ENCODE measurements at regions of chr14 and their contacts with region 1.

Region 1: GRCh38 chr14:65287264-65288131 is 125.0 kb upstream of the FUT8 start:
- DNase-seq: peak; percentile 81
- CTCF ChIP-seq: no peak

Region 2: DNA sequence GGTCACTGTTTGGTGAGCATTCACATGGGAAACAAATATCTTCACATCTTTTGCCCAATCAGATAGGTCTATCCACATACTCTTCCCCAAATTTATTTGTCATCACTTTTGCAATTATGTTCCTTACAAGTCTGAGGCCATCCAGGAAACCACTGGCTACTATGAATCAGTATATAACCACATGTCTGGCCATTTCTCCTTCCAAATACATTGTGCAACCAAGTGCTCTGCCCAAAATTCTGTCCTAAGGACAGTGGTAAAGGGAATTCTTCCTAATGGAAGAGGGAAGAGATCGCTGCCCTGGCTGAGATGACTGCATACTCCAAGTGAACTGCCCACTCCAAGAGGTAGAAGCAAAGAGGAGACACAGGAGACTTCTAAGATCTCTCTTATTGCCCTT is 36.3 kb before region 1 on chr14:
- CTCF ChIA-PET with region 1: no interaction called
- POLR2A ChIA-PET with region 1: no interaction called
- DNase-seq: no peak
- CTCF ChIP-seq: no peak

Region 3: GRCh38 chr14:65277027-65277426 is 10.5 kb before region 1 on chr14:
- CTCF ChIA-PET with region 1: interaction called, 11 read pairs
- POLR2A ChIA-PET with region 1: no interaction called
- DNase-seq: no peak
- CTCF ChIP-seq: no peak

Region 4: DNA sequence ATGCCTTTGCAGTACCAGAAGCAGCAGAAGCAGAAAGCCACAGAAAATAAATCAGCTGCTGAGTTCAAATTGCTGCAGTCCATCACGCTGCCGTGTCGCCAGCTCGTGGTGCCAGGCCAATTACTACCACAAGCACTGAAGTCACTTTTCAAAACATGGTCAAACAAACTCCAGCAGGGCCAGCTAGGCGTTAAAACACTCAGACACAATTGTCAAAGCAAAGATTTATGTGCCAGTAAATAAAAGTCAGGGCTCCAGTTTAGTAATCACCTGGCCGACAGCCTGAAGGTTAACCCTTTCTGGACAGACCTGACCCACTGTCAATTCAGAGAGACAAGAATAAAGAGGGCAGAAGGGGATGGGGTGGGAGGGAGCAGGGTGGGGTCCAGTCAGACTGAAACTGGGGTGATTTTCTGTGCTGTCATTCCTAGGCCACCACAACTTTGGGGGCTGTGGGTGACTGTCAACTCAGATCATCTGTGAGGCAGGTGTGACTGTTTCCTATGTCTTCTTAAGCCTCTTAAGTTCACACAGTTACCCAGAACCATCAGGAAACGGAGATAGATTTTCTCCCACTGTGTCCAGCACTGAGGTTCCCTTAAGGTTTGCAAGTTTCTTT is 15.2 kb after region 1 on chr14:
- CTCF ChIA-PET with region 1: interaction called, 51 read pairs
- POLR2A ChIA-PET with region 1: interaction called, 9 read pairs
- DNase-seq: peak; percentile 67
- CTCF ChIP-seq: no peak

Measured in GM10248 (cell line).